IMR-90 (cell line): ENCODE measurements at regions of chr16 and their contacts with region 1.

Region 1: GRCh38 chr16:48385272-48386150 is at the start of gene SIAH1:
- DNase-seq: peak; percentile 68
- ATAC-seq: peak; percentile 84
- H3K4me3 ChIP-seq: peak within 1 kb of the TSS; percentile 95
- H3K27ac ChIP-seq: peak within 1 kb of the TSS; percentile 98
- H3K4me1 ChIP-seq: peaks cover 1% of the 10 kb centered on the region; the same call in 1 of the 2 replicates
- H3K27me3 ChIP-seq: no peaks in the 10 kb centered on the region
- CTCF ChIP-seq: no peak
- POLR2A ChIP-seq: peak; percentile 61
- RAD21 ChIP-seq: no peak; the same call in 1 of the 2 replicates
- total RNA-seq, gene SIAH1: 16.9 and 17.7 TPM in 2 replicates

Region 2: GRCh38 chr16:48194828-48195556 is 190.5 kb before region 1 on chr16:
- CTCF ChIA-PET with region 1: no interaction called
- POLR2A ChIA-PET with region 1: no interaction called
- dilution Hi-C with region 1: no loop called
- in situ Hi-C with region 1: no loop called
- intact Hi-C with region 1: no loop called
- DNase-seq: peak; percentile 56
- ATAC-seq: peak; percentile 87
- H3K4me3 ChIP-seq: no peak overlapping the region
- H3K27ac ChIP-seq: no peak overlapping the region
- H3K4me1 ChIP-seq: no peaks in the 10 kb centered on the region
- H3K27me3 ChIP-seq: peaks cover 12% of the 10 kb centered on the region
- CTCF ChIP-seq: no peak
- POLR2A ChIP-seq: no peak
- RAD21 ChIP-seq: no peak

Region 3: GRCh38 chr16:48353565-48354163 is 31.8 kb before region 1 on chr16:
- CTCF ChIA-PET with region 1: no interaction called
- POLR2A ChIA-PET with region 1: no interaction called
- dilution Hi-C with region 1: no loop called
- in situ Hi-C with region 1: no loop called
- intact Hi-C with region 1: no loop called
- DNase-seq: peak; percentile 75
- ATAC-seq: peak; percentile 84
- H3K4me3 ChIP-seq: no peak overlapping the region
- H3K27ac ChIP-seq: no peak overlapping the region
- H3K4me1 ChIP-seq: no peaks in the 10 kb centered on the region
- H3K27me3 ChIP-seq: no peaks in the 10 kb centered on the region
- CTCF ChIP-seq: peak; percentile 97
- POLR2A ChIP-seq: no peak
- RAD21 ChIP-seq: peak; percentile 87

Region 4: GRCh38 chr16:48365581-48366164 is 19.8 kb before region 1 on chr16:
- CTCF ChIA-PET with region 1: interaction called, 3 read pairs
- POLR2A ChIA-PET with region 1: no interaction called
- dilution Hi-C with region 1: no loop called
- in situ Hi-C with region 1: no loop called
- intact Hi-C with region 1: loop called (anchors 1 kb)
- DNase-seq: peak; percentile 80
- ATAC-seq: peak; percentile 99
- H3K4me3 ChIP-seq: peak overlapping the region; percentile 50
- H3K27ac ChIP-seq: peak overlapping the region; percentile 84
- H3K4me1 ChIP-seq: peaks cover 13% of the 10 kb centered on the region
- H3K27me3 ChIP-seq: no peaks in the 10 kb centered on the region
- CTCF ChIP-seq: no peak
- POLR2A ChIP-seq: peak; percentile 77
- RAD21 ChIP-seq: no peak

Region 5: DNA sequence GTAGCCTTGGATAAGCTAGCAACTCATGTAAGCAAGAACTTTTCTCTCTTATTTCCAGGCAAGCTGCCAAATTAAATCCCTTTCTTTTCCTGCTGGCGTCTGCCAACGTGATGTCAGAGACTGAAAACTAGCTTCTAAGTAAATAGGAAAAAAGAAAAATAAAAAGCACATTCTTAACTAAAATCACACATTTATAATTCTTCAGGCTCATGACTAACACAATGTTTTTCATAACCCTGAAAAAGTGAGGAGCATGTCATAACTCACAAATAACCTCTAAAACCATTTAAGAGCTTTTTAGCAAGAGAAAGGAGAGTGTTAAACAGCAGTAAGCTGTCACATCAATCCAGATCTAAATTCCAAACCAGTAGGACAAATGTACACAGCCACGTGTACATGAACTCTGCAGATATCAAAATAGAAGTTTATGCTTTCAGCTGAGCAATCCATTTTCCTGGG is 114.4 kb after region 1 on chr16:
- CTCF ChIA-PET with region 1: no interaction called
- POLR2A ChIA-PET with region 1: no interaction called
- dilution Hi-C with region 1: no loop called
- in situ Hi-C with region 1: no loop called
- intact Hi-C with region 1: loop called (anchors 5 kb)
- DNase-seq: peak; percentile 93
- ATAC-seq: peak; percentile 40; the same call in 1 of the 2 replicates
- H3K4me3 ChIP-seq: no peak overlapping the region
- H3K27ac ChIP-seq: peak overlapping the region; percentile 23; the same call in 1 of the 2 replicates
- H3K4me1 ChIP-seq: peaks cover 26% of the 10 kb centered on the region
- H3K27me3 ChIP-seq: no peaks in the 10 kb centered on the region
- CTCF ChIP-seq: no peak
- POLR2A ChIP-seq: no peak
- RAD21 ChIP-seq: no peak

Region 6: DNA sequence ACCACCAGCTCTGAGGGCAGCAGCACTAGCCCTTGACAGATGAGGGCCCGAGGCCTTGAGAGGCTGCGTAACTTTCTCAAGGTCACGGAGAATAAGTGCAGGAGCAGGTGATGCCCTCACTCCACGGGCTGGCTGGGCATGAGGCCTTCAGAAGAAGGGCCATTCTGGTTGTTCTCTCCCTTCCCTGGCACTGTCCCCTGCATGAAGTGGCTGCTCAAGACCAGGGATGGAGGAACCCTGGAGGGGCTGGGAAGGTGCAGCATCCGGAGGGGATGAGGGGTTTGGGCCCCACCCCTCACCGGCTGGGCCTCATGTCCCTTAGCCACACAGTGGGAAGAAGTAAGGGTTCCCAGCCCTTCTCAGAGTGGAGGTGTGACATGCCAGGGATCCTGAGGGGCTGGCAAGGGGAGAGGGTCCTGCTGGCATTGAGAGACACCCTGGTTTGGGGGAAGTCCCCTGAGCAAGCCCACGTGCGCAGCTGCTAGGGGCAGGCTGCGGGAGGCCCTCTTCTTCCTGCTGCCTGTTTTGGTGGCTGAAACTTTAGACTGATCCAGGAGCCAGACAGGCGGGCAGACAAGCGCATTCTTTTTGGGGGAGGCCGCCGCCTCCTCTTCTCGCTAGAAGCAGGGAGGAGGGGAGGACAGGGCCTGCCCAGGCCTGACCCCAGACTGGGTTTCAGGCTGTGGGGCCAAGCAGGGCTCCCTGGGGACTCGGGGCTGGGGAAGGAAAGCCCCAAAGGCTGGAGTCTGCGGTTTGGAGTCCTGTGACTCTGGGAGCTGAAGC is 150.5 kb after region 1 on chr16:
- CTCF ChIA-PET with region 1: no interaction called
- POLR2A ChIA-PET with region 1: no interaction called
- dilution Hi-C with region 1: no loop called
- in situ Hi-C with region 1: no loop called
- intact Hi-C with region 1: loop called (anchors 1 kb)
- DNase-seq: peak; percentile 31
- ATAC-seq: peak; percentile 83
- H3K4me3 ChIP-seq: no peak overlapping the region
- H3K27ac ChIP-seq: peak overlapping the region; percentile 51
- H3K4me1 ChIP-seq: peaks cover 21% of the 10 kb centered on the region
- H3K27me3 ChIP-seq: no peaks in the 10 kb centered on the region
- CTCF ChIP-seq: no peak
- POLR2A ChIP-seq: no peak
- RAD21 ChIP-seq: no peak

Region 7: DNA sequence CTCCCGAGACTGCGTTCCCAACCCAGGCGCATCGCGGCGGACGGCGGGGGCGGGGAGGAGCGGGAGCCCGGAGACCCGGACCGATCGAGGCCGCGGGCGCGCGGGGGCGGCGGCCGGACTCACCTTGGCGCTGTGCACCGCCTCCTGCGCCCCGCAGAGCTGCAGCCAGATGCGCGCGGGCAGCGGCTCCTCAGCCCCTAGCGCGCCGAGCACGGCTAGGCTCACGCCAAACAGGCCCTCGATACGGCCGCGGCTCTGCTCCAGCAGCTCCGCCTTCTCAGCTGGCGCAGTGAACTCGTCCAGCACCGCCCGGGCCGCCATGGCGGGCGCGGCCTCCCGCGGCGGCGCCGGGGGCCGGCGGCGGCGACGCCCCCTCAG is 224.1 kb after region 1 on chr16:
- CTCF ChIA-PET with region 1: no interaction called
- POLR2A ChIA-PET with region 1: no interaction called
- dilution Hi-C with region 1: no loop called
- in situ Hi-C with region 1: no loop called
- intact Hi-C with region 1: loop called (anchors 5 kb)
- DNase-seq: peak; percentile 54
- ATAC-seq: peak; percentile 80
- H3K4me3 ChIP-seq: peak overlapping the region; percentile 98
- H3K27ac ChIP-seq: peak overlapping the region; percentile 77
- H3K4me1 ChIP-seq: peaks cover 22% of the 10 kb centered on the region
- H3K27me3 ChIP-seq: no peaks in the 10 kb centered on the region
- CTCF ChIP-seq: no peak
- POLR2A ChIP-seq: no peak
- RAD21 ChIP-seq: no peak